ENCODE measurements at regions of chrX and their contacts with region 1.

Region 1: DNA sequence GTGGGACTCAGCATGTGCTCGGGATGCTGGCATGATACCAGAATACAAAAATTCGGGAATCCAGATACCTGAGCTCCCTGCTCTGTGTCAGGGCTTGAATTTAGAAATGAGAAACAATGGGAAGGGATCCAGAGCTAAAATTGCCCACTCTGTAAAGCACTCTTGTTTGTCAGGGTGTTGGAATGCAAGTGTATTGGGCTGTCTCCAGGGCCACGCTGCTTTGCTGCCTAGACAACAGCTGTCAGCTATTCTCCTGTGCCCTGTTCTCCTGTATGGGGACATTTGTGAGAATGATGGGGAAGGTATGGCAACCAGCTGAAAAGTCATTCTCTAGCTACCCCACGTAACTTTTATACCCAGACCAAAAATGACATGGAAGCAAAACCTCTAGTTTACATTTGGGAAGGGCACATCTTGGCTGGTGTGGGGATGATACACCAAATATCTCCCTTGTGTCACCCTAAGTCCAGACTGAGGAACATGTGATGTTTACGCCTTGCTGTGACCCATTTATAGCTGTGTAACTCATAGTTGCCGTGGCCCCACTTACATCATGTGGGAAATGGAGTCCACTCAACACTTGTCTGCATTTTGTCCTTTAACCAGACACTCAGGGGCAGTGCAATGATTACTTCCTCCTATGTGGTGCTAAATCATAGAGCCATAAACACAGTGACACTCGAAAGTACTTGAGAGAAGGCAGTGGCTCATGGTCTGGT is 46.6 kb downstream of the SMPX start:
- DNase-seq: no peak
- ATAC-seq: peak; percentile 92

Region 2: DNA sequence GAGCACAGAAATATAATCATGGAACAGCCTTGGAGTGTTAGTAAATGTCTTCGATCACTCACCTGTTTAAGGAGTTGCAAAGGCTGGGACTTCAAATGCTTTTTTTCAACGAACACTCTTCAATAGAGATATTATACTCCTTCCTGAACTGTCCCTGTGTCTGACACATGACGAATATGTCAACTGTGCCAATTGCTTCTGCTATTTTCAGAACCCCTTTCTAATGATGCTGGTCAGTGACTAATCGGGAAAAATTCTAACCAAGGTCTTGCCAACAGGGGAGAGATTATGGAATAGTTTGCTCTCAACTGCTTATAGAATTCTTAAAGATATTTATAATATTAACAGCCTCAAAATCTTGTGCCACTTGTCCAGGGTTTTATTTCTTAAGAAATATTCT is 44.6 kb before region 1 on chrX:
- intact Hi-C with region 1: loop called (anchors 10 kb)
- DNase-seq: no peak
- ATAC-seq: peak; percentile 42